PC-3 (cell line): ENCODE measurements at regions of chr21 and their contacts with region 1.

Region 1: DNA sequence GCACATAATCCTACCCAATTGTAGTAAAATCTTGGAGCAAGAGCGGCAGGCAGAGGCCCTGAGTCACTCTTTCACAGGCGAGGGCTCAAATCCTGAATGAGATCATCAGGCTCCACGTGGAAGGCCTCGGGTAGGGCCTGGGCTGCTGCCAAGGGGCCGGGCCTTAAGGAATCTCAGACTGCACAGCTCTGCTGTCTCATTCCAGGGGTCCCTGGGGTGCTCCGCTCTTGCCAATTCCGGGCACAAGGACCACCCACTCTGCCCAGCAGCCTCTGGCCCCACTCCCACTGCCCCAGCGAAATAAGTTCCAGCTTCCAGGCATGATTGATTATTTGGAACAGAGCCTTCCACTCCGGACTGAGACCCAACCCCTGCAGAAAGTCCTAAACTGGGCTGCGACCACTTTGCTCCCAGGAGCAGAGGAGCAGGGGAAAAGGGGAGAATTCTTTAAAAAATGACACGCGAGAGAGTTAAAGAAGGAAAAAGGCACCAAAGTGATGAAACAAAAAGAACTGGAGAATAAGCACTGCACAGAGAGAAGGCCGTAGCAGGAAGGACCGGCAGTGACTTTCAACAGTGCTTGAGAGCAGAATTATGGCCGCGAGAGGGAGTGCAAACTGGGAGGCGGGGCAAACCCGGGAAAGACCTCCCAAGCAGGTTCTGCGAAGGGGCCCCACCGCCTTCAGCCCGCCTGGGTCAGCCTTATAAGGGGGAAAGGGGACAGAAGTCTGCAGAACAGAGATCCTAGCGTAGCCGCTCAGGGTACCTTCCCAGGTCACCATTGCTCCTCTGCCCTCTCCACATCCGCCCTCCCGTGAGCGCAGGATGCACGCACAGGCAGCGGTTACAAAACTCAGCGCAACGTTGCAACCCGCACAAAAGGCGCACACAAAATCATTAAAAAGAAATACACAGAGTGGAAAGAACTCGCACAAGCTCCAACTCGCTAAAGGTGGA is 2.0 kb downstream of the ADAMTS1 start:
- DNase-seq: peak; percentile 96
- ATAC-seq: peak; percentile 58
- H3K4me3 ChIP-seq: peak overlapping the region; percentile 78
- H3K27ac ChIP-seq: peak overlapping the region; percentile 66
- H3K4me1 ChIP-seq: peaks cover 17% of the 10 kb centered on the region
- H3K27me3 ChIP-seq: no peaks in the 10 kb centered on the region
- CTCF ChIP-seq: 0 out of 2 replicates have a peak, but pooled peaks have one; percentile 35

Region 2: DNA sequence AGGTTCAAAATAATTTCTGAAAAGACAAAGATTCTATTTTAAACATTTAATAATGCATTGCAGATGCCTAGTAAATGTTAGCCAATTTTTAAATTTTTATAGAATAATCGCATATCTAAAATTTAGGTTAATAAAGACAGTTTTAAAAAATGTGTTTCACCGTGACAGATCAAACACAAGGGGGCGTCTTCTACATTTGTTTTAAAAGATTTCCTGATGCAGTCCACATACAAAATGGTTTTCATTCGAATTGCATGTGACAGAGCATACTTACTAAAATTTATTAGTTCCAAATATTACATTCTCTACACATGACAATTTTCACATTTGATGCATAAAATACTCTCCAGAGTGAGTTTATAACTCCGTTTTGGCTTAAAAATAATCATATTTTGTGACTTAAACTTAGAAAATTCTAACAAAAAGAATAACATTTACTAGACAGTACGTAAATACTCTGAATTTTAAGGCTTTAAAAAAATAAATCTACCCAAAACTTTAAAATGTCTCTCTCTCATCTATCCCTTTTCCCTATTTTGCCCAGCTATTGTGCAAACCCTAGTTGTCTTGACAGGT is 73.6 kb before region 1 on chr21:
- CTCF ChIA-PET with region 1: interaction called, 3 read pairs
- POLR2A ChIA-PET with region 1: no interaction called
- intact Hi-C with region 1: loop called (anchors 1 kb)
- DNase-seq: peak; percentile 63
- ATAC-seq: peak; percentile 40; the same call in 1 of the 2 replicates
- H3K4me3 ChIP-seq: no peak overlapping the region
- H3K27ac ChIP-seq: no peak overlapping the region
- H3K4me1 ChIP-seq: no peaks in the 10 kb centered on the region
- H3K27me3 ChIP-seq: no peaks in the 10 kb centered on the region
- CTCF ChIP-seq: peak; percentile 79

Region 3: GRCh38 chr21:26795866-26796329 is 47.4 kb before region 1 on chr21:
- CTCF ChIA-PET with region 1: no interaction called
- POLR2A ChIA-PET with region 1: no interaction called
- intact Hi-C with region 1: loop called (anchors 5 kb)
- DNase-seq: peak; percentile 84
- ATAC-seq: peak; percentile 82
- H3K4me3 ChIP-seq: no peak overlapping the region
- H3K27ac ChIP-seq: peak overlapping the region; percentile 53
- H3K4me1 ChIP-seq: peaks cover 30% of the 10 kb centered on the region
- H3K27me3 ChIP-seq: no peaks in the 10 kb centered on the region
- CTCF ChIP-seq: no peak

Region 4: GRCh38 chr21:26892151-26892550 is 48.9 kb after region 1 on chr21:
- CTCF ChIA-PET with region 1: no interaction called
- POLR2A ChIA-PET with region 1: no interaction called
- intact Hi-C with region 1: no loop called
- DNase-seq: no peak
- ATAC-seq: no peak
- H3K4me3 ChIP-seq: no peak overlapping the region
- H3K27ac ChIP-seq: no peak overlapping the region
- H3K4me1 ChIP-seq: no peaks in the 10 kb centered on the region
- H3K27me3 ChIP-seq: no peaks in the 10 kb centered on the region
- CTCF ChIP-seq: no peak

Region 5: GRCh38 chr21:28522014-28522799 is 1679.0 kb after region 1 on chr21:
- CTCF ChIA-PET with region 1: no interaction called
- POLR2A ChIA-PET with region 1: no interaction called
- intact Hi-C with region 1: loop called (anchors 5 kb)
- DNase-seq: peak; percentile 54
- ATAC-seq: peak; percentile 75
- H3K4me3 ChIP-seq: no peak overlapping the region
- H3K27ac ChIP-seq: peak overlapping the region; percentile 38
- H3K4me1 ChIP-seq: peaks cover 18% of the 10 kb centered on the region
- H3K27me3 ChIP-seq: no peaks in the 10 kb centered on the region
- CTCF ChIP-seq: peak; percentile 71; the same call in 1 of the 2 replicates